ENCODE measurements at regions of chr2 and their contacts with region 1.

Region 1: GRCh38 chr2:241112592-241112991 is 10.5 kb upstream of the MTERF4 start:
- DNase-seq: peak; percentile 82
- H3K4me3 Mint-ChIP-seq: peak overlapping the region; percentile 85
- H3K27ac Mint-ChIP-seq: peak overlapping the region; percentile 96
- H3K4me1 Mint-ChIP-seq: peaks cover 36% of the 10 kb centered on the region
- H3K27me3 Mint-ChIP-seq: no peaks in the 10 kb centered on the region

Region 2: DNA sequence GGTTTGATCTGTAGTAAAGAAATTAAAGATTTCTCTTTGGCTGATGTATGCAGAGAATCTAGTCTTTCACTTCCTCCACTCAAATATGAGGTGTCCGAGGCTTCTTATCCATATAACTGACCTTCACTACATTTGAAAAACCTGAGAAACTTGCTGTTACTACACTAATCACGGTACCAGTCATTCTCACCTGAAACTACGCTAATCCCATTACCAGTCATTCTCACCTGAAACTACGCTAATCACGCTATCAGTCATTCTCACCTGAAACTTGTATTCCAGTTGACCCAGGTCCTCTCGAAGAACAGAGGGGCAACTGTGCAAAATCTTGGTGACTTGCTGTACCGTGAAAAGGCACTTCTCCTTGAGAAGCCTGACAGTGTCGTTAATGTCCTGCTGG is 15.6 kb before region 1 on chr2:
- CTCF ChIA-PET with region 1: interaction called, 4 read pairs
- POLR2A ChIA-PET with region 1: interaction called, 8 read pairs
- intact Hi-C with region 1: loop called (anchors 1 kb)
- DNase-seq: peak; percentile 50
- H3K4me3 Mint-ChIP-seq: peak overlapping the region; percentile 17
- H3K27ac Mint-ChIP-seq: peak overlapping the region; percentile 89
- H3K4me1 Mint-ChIP-seq: peaks cover 72% of the 10 kb centered on the region
- H3K27me3 Mint-ChIP-seq: no peaks in the 10 kb centered on the region

Region 3: GRCh38 chr2:241102239-241102803 is 10.3 kb before region 1 on chr2 and contains the start of gene MTERF4:
- CTCF ChIA-PET with region 1: interaction called, 4 read pairs
- POLR2A ChIA-PET with region 1: interaction called, 8 read pairs
- intact Hi-C with region 1: loop called (anchors 1 kb)
- DNase-seq: peak; percentile 93
- H3K4me3 Mint-ChIP-seq: peak within 1 kb of the TSS; percentile 91
- H3K27ac Mint-ChIP-seq: peak within 1 kb of the TSS; percentile 95
- H3K4me1 Mint-ChIP-seq: peaks cover 61% of the 10 kb centered on the region
- H3K27me3 Mint-ChIP-seq: no peaks in the 10 kb centered on the region
- total RNA-seq, gene MTERF4: 43.9 to 46.0 TPM

Region 4: GRCh38 chr2:241125626-241126025 is 13.0 kb after region 1 on chr2:
- CTCF ChIA-PET with region 1: interaction called, 5 read pairs
- POLR2A ChIA-PET with region 1: interaction called, 7 read pairs
- intact Hi-C with region 1: loop called (anchors 1 kb)
- DNase-seq: no peak
- H3K4me3 Mint-ChIP-seq: peak overlapping the region; percentile 43
- H3K27ac Mint-ChIP-seq: peak overlapping the region; percentile 99
- H3K4me1 Mint-ChIP-seq: peaks cover 70% of the 10 kb centered on the region
- H3K27me3 Mint-ChIP-seq: no peaks in the 10 kb centered on the region

Region 5: GRCh38 chr2:241179899-241180298 is 67.3 kb after region 1 on chr2:
- CTCF ChIA-PET with region 1: no interaction called
- POLR2A ChIA-PET with region 1: no interaction called
- intact Hi-C with region 1: no loop called
- DNase-seq: peak; percentile 78
- H3K4me3 Mint-ChIP-seq: no peak overlapping the region
- H3K27ac Mint-ChIP-seq: peak overlapping the region; percentile 69
- H3K4me1 Mint-ChIP-seq: peaks cover 19% of the 10 kb centered on the region
- H3K27me3 Mint-ChIP-seq: no peaks in the 10 kb centered on the region

Region 6: DNA sequence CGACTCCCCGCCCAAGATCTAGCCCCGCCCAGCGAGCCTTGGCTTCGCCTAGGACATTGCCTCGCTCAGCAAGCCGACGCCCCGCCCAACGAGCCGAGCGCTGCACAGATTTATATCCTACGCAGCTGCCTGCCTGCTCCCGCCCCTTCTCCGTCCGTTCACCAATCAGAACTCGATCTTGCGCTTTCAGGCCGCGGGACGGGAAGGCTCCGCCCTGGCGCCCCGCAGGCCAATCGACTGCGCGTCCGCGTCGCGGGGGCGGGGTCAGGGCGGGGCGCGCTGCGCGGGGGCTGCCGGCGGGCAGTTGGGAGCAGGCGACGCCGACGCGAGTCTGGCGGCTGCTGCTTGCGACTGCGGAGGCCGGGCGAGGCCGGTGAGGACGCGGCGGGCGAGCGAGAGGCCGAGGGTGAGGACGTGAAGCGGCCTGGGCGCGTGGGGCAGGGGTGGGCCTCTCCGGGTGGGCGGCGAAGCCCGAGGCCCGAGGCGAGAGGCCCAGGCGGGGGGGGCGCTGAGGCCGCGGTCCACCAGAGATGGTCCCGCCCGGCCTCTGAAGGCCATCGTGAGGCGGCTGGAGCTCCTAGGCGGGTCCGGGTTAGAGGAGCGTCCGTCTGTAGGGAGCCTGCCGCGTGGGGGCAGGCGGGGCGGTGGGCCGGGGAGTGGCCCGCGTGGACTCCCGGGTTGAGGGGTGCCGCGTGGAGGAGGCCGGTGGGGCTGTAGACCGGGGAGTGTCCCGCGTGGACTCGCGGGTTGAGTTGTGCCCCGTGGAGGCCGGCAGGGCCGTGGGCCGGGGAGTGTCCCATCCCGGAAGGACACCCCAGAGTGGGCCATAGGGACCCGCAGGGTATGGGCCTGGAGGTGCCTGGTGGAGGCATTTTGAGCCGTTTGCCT is 243.6 kb after region 1 on chr2 and contains the start of gene FARP2:
- CTCF ChIA-PET with region 1: no interaction called
- POLR2A ChIA-PET with region 1: no interaction called
- intact Hi-C with region 1: no loop called
- DNase-seq: peak; percentile 98
- H3K4me3 Mint-ChIP-seq: peak within 1 kb of the TSS; percentile 75
- H3K27ac Mint-ChIP-seq: peak within 1 kb of the TSS; percentile 79
- H3K4me1 Mint-ChIP-seq: peaks cover 35% of the 10 kb centered on the region
- H3K27me3 Mint-ChIP-seq: no peaks in the 10 kb centered on the region
- total RNA-seq, gene FARP2: 25.1 to 29.5 TPM

Measured in activated CD4-positive, alpha-beta memory T cell treated with anti-CD3 and anti-CD28 coated beads for 36 hours (primary cell).